IMR-90 (cell line): ENCODE measurements at regions of chr7 and their contacts with region 1.

Region 1: GRCh38 chr7:45646996-45647825 is 73.0 kb downstream of the ADCY1 start:
- DNase-seq: peak; percentile 8
- ATAC-seq: peak; percentile 37; the same call in 1 of the 2 replicates
- H3K4me3 ChIP-seq: no peak overlapping the region
- H3K27ac ChIP-seq: no peak overlapping the region
- H3K4me1 ChIP-seq: no peaks in the 10 kb centered on the region
- H3K27me3 ChIP-seq: peaks cover 12% of the 10 kb centered on the region
- CTCF ChIP-seq: no peak
- POLR2A ChIP-seq: no peak
- RAD21 ChIP-seq: no peak

Region 2: DNA sequence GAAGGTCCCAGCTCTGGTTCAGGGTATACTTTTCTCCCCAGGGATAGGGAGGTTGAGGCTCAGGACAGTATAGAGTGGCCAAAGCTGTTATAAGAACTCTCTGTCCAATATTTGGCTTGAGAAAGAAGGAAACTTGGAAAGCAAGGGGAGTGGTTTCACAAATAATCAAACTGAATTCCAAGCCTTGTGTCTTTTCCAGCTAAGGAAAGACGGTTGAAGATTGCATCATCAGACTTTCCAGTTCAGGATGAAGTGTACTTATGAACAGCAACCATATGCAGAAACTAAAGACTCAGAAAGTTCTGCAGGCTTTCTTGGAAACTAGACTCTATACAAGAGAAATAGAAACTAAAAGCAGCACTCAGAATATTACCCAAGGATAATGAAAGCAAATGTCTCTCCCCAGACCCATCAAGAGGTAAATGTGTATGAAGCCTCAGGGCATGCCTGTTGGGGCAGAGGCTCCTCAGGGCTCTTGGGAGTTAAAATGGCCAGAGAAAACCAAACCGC is 443.2 kb before region 1 on chr7:
- CTCF ChIA-PET with region 1: no interaction called
- POLR2A ChIA-PET with region 1: interaction called, 12 read pairs
- dilution Hi-C with region 1: no loop called
- in situ Hi-C with region 1: no loop called
- intact Hi-C with region 1: no loop called
- DNase-seq: peak; percentile 51
- ATAC-seq: peak; percentile 60
- H3K4me3 ChIP-seq: no peak overlapping the region
- H3K27ac ChIP-seq: peak overlapping the region; percentile 3; the same call in 1 of the 2 replicates
- H3K4me1 ChIP-seq: peaks cover 4% of the 10 kb centered on the region; the same call in 1 of the 2 replicates
- H3K27me3 ChIP-seq: peaks cover 13% of the 10 kb centered on the region
- CTCF ChIP-seq: no peak
- POLR2A ChIP-seq: no peak
- RAD21 ChIP-seq: no peak